Psoas muscle (tissue), 8 donors: ENCODE measurements at regions of chr18 and their contacts with region 1.

Region 1: GRCh38 chr18:8747440-8747937 is 42.1 kb downstream of the MTCL1 start:
- DNase-seq: no peak
- ATAC-seq: no peak
- H3K4me3 ChIP-seq: no peak overlapping the region
- H3K27ac ChIP-seq: no peak overlapping the region
- H3K4me1 ChIP-seq: peaks cover 6% of the 10 kb centered on the region
- H3K27me3 ChIP-seq: no peaks in the 10 kb centered on the region
- CTCF ChIP-seq: no peak

Region 2: GRCh38 chr18:8786478-8787370 is 39.2 kb after region 1 on chr18:
- intact Hi-C with region 1: loop called in 1 of 2 experiments (anchors 5 kb)
- DNase-seq: no peak
- ATAC-seq: no peak
- H3K4me3 ChIP-seq: no peak overlapping the region
- H3K27ac ChIP-seq: no peak overlapping the region
- H3K4me1 ChIP-seq: peaks cover 7% of the 10 kb centered on the region
- H3K27me3 ChIP-seq: no peaks in the 10 kb centered on the region
- CTCF ChIP-seq: no peak

Region 3: GRCh38 chr18:8901019-8901418 is 153.5 kb after region 1 on chr18:
- intact Hi-C with region 1: no loop called
- DNase-seq: no peak
- ATAC-seq: no peak
- H3K4me3 ChIP-seq: no peak overlapping the region
- H3K27ac ChIP-seq: no peak overlapping the region
- H3K4me1 ChIP-seq: no peaks in the 10 kb centered on the region
- H3K27me3 ChIP-seq: peaks cover 0 to 1% (median 0%) of the 10 kb centered on the region in 3 donors
- CTCF ChIP-seq: no peak